Naive thymus-derived CD4-positive, alpha-beta T cell (primary cell): ENCODE measurements at regions of chr1 and their contacts with region 1.

Region 1: GRCh38 chr1:25022361-25023189 is 92.5 kb upstream of the RUNX3 start:
- DNase-seq: peak; percentile 80 to 97 (median 91)
- ATAC-seq: peak; percentile 92
- H3K4me3 ChIP-seq: peak overlapping the region; percentile 49
- H3K4me3 Mint-ChIP-seq: peak overlapping the region; percentile 10 to 83 (median 76)
- H3K27ac ChIP-seq: peak overlapping the region; percentile 89
- H3K27ac Mint-ChIP-seq: peak overlapping the region; percentile 91 to 98 (median 96)
- H3K4me1 ChIP-seq: peaks cover 57 to 58% of the 10 kb centered on the region in 2 donors
- H3K4me1 Mint-ChIP-seq: peaks cover 45 to 89% (median 67%) of the 10 kb centered on the region in 7 donors
- H3K27me3 ChIP-seq: no peaks in the 10 kb centered on the region
- H3K27me3 Mint-ChIP-seq: no peaks in the 10 kb centered on the region

Region 2: DNA sequence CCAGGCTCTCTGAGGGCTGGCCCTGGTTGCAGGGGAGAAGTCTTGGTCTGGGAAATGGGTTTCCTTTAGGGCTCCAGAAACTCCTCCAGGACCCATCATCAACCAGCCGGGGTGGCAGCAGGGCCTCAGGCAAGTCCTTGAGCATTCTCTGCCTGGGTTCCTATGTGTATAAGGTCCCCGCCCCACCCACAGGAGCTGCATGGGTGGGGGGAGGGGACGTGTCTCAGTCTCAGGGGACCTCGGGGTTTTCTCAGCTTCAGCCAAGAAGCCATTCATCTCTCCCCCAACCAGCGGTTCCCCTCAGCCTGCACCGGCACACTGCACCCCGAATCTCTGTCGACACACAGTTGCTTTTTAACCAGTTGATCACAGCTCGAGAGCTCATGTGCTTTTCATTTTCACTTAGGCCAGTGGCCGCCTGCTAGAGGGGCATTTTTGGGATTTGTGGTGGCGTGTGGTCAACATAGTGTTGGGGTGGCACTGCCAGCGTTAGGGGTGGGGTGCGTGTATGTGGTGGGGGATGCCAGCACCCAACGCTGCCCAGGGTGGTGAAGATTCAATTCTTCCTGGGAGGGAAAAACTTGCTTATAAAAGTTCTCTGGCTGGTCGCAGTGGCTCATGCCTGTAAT is 99.0 kb before region 1 on chr1:
- CTCF ChIA-PET with region 1: interaction called, 4 read pairs
- POLR2A ChIA-PET with region 1: interaction called, 10 read pairs
- intact Hi-C with region 1: loop called in 1 of 2 experiments (anchors 1 kb)
- DNase-seq: no peak
- ATAC-seq: no peak
- H3K4me3 ChIP-seq: peak overlapping the region; percentile 29
- H3K4me3 Mint-ChIP-seq: peak overlapping the region in 7 of 10 donors; percentile 6 to 68 (median 53)
- H3K27ac ChIP-seq: peak overlapping the region; percentile 61
- H3K27ac Mint-ChIP-seq: peak overlapping the region; percentile 38 to 81 (median 54)
- H3K4me1 ChIP-seq: peaks cover 49 to 84% of the 10 kb centered on the region in 2 donors
- H3K4me1 Mint-ChIP-seq: peaks cover 45 to 85% (median 73%) of the 10 kb centered on the region in 7 donors
- H3K27me3 ChIP-seq: no peaks in the 10 kb centered on the region
- H3K27me3 Mint-ChIP-seq: no peaks in the 10 kb centered on the region

Region 3: DNA sequence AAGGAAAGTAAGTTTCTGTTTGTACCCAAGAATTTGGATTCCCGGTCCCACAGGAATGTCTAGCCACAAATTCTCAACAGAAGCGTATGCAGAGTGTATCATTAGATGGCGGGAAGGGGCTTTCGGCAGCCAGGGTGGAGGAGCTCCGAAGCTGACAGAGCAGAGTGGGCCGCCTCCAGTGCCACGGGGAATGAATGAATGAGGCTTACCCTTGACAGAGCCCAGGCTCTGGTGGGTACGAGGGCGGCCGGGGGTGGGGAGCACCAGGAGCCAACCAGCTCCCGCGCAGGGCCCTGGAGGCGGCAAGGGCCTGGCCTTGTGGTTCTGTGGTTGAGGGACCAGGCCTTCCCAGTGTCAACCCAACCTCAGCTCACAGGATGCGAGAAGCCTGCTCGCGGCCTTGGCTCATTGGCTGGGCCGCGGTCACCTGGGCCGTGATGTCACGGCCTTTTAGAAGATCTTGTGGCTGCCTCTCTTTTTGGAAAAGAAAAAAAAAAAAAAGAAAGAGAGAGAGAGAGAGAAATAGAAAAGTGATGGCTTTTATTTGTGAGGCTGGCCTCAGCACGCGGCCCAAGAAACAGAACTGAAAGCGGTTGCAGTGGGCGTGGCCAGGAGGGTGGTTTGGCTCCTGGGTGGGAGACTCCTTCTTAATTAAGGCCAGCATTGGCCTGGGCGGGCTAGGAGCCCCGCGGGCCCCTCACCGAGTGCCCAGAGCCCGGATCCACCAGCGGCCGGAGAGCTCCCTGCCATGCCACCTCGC is 57.6 kb before region 1 on chr1:
- CTCF ChIA-PET with region 1: interaction called, 5 read pairs
- POLR2A ChIA-PET with region 1: interaction called, 33 read pairs
- intact Hi-C with region 1: loop called (anchors 1 kb)
- DNase-seq: peak; percentile 62 to 94 (median 88)
- ATAC-seq: peak; percentile 96
- H3K4me3 ChIP-seq: peak overlapping the region; percentile 65
- H3K4me3 Mint-ChIP-seq: peak overlapping the region; percentile 74 to 92 (median 83)
- H3K27ac ChIP-seq: peak overlapping the region; percentile 74
- H3K27ac Mint-ChIP-seq: peak overlapping the region; percentile 89 to 97 (median 95)
- H3K4me1 ChIP-seq: peaks cover 30 to 39% of the 10 kb centered on the region in 2 donors
- H3K4me1 Mint-ChIP-seq: peaks cover 36 to 85% (median 69%) of the 10 kb centered on the region in 7 donors
- H3K27me3 ChIP-seq: no peaks in the 10 kb centered on the region
- H3K27me3 Mint-ChIP-seq: peaks cover 0 to 3% (median 0%) of the 10 kb centered on the region in 5 donors

Region 4: DNA sequence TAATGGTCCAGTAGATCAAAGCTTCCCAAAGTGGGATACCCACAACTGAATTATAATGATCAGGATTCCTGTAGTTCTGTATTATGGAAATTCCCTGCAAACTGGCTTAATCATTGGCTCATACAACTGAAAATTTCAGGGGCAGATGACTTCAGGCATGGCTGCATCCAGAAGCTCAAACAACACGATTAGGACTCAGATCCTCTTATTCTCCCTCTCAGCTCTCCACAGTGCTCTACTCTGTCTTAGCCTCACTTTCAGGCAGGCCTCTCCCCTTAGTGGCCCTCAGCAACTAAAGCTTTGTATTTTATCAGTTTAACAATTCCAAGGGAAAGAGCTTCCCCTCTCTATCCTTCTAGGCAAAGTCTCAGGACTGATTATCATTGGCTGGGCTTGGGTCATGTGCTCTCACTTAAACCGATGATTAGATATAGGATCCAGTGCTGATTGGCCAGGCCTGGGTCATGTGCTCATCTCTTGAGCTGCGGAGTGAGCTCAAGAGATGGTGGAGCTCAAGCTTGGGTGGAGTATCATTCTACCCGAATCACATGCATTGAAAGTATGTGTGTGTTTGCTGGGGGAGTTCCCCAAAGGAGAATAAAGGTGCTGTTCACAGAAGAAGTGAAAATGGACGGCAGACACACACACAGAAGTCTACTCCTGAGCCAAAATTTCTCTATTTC is 34.6 kb before region 1 on chr1:
- CTCF ChIA-PET with region 1: interaction called, 7 read pairs
- POLR2A ChIA-PET with region 1: interaction called, 67 read pairs
- intact Hi-C with region 1: loop called (anchors 1 kb)
- DNase-seq: no peak
- ATAC-seq: peak; percentile 78
- H3K4me3 ChIP-seq: no peak overlapping the region
- H3K4me3 Mint-ChIP-seq: peak overlapping the region in 8 of 10 donors; percentile 6 to 80 (median 58)
- H3K27ac ChIP-seq: no peak overlapping the region
- H3K27ac Mint-ChIP-seq: peak overlapping the region; percentile 49 to 100 (median 81)
- H3K4me1 ChIP-seq: peaks cover 66 to 96% of the 10 kb centered on the region in 2 donors
- H3K4me1 Mint-ChIP-seq: peaks cover 78 to 99% (median 92%) of the 10 kb centered on the region in 7 donors
- H3K27me3 ChIP-seq: no peaks in the 10 kb centered on the region
- H3K27me3 Mint-ChIP-seq: peaks cover 0 to 10% (median 0%) of the 10 kb centered on the region in 5 donors

Region 5: DNA sequence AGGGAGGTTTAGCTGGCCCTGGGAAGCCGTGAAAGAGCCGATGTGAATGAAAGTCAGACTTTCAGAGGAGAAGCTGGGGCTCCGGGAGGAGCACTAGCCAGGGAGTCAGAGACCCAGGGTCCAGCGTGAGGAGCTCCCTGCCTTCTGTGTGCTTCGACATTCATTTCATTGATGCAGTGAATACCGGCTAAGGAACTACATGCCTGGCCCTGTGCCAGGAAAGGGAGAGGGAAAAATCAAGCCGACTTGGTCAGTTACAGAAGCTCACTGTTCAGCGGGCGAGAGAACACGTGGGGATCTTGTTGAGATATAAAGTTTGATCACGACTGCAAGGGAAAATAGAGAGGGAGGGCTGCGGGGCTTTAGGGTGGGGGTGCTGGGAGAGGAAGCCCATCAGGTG is 15.8 kb before region 1 on chr1:
- CTCF ChIA-PET with region 1: interaction called, 7 read pairs
- POLR2A ChIA-PET with region 1: interaction called, 15 read pairs
- intact Hi-C with region 1: loop called in 1 of 2 experiments (anchors 2 kb)
- DNase-seq: no peak
- ATAC-seq: no peak
- H3K4me3 ChIP-seq: no peak overlapping the region
- H3K4me3 Mint-ChIP-seq: peak overlapping the region in 4 of 10 donors; percentile 25 to 47 (median 36)
- H3K27ac ChIP-seq: no peak overlapping the region
- H3K27ac Mint-ChIP-seq: peak overlapping the region in 4 of 9 donors; percentile 60 to 83 (median 75)
- H3K4me1 ChIP-seq: peaks cover 13 to 24% of the 10 kb centered on the region in 2 donors
- H3K4me1 Mint-ChIP-seq: peaks cover 25 to 72% (median 42%) of the 10 kb centered on the region in 7 donors
- H3K27me3 ChIP-seq: no peaks in the 10 kb centered on the region
- H3K27me3 Mint-ChIP-seq: peaks cover 0 to 2% (median 0%) of the 10 kb centered on the region in 5 donors

Region 6: DNA sequence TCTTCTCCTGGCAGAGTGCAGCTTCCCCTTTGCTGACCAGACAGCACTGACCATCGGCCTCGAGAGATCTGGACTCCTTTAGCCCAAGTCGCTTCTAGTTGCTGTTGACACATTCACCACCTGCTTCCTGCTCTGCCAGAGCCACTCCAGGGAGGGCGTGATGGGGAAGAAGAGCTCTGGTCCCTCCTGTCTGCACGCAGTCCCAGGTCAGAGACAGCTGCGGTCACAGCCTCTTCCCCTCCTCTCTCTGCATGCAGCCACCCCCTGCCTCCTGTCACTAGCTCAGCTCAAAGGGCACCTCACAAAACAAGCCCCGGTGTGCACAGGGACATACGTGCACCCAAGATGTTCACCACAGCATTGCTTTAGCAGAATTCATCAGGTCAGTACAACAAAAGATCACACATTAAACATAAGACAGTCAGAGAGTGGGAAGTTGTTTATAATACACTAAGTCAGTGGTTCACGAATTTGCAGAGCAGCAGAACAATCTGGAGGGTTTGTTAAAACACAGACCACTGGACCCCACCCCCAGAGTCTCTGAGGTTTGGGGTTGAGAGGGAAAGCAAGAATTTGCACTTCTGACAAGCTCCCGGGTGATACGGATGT is 76.9 kb after region 1 on chr1:
- CTCF ChIA-PET with region 1: no interaction called
- POLR2A ChIA-PET with region 1: no interaction called
- intact Hi-C with region 1: loop called in 1 of 2 experiments (anchors 5 kb)
- DNase-seq: peak in 1 of 9 donors; percentile 46
- ATAC-seq: peak; percentile 49
- H3K4me3 ChIP-seq: no peak overlapping the region
- H3K4me3 Mint-ChIP-seq: peak overlapping the region in 8 of 10 donors; percentile 2 to 77 (median 55)
- H3K27ac ChIP-seq: no peak overlapping the region
- H3K27ac Mint-ChIP-seq: peak overlapping the region in 7 of 9 donors; percentile 6 to 84 (median 61)
- H3K4me1 ChIP-seq: peaks cover 44 to 73% of the 10 kb centered on the region in 2 donors
- H3K4me1 Mint-ChIP-seq: peaks cover 33 to 74% (median 59%) of the 10 kb centered on the region in 7 donors
- H3K27me3 ChIP-seq: no peaks in the 10 kb centered on the region
- H3K27me3 Mint-ChIP-seq: peaks cover 0 to 4% (median 0%) of the 10 kb centered on the region in 5 donors

Region 7: GRCh38 chr1:25128121-25128621 is 105.6 kb after region 1 on chr1:
- CTCF ChIA-PET with region 1: no interaction called
- POLR2A ChIA-PET with region 1: no interaction called
- intact Hi-C with region 1: no loop called
- DNase-seq: no peak
- ATAC-seq: no peak
- H3K4me3 ChIP-seq: no peak overlapping the region
- H3K4me3 Mint-ChIP-seq: no peak overlapping the region
- H3K27ac ChIP-seq: no peak overlapping the region
- H3K27ac Mint-ChIP-seq: no peak overlapping the region
- H3K4me1 ChIP-seq: no peaks in the 10 kb centered on the region
- H3K4me1 Mint-ChIP-seq: peaks cover 0 to 1% (median 0%) of the 10 kb centered on the region in 7 donors
- H3K27me3 ChIP-seq: no peaks in the 10 kb centered on the region
- H3K27me3 Mint-ChIP-seq: peaks cover 0 to 37% (median 0%) of the 10 kb centered on the region in 5 donors